Transverse colon (tissue), 4 donors: ENCODE measurements at regions of chr3 and their contacts with region 1.

Region 1: GRCh38 chr3:181105646-181106045 is 116.1 kb upstream of the DNAJC19 start:
- DNase-seq: no peak
- H3K4me3 ChIP-seq: no peak overlapping the region
- H3K27ac ChIP-seq: no peak overlapping the region
- H3K4me1 ChIP-seq: no peaks in the 10 kb centered on the region
- H3K27me3 ChIP-seq: no peaks in the 10 kb centered on the region
- CTCF ChIP-seq: no peak
- EP300 ChIP-seq: no peak
- POLR2A ChIP-seq: no peak

Region 2: GRCh38 chr3:180898572-180898971 is 207.1 kb before region 1 on chr3:
- in situ Hi-C with region 1: no loop called
- intact Hi-C with region 1: loop called (anchors 5 kb)
- DNase-seq: no peak
- H3K4me3 ChIP-seq: no peak overlapping the region
- H3K27ac ChIP-seq: no peak overlapping the region
- H3K4me1 ChIP-seq: no peaks in the 10 kb centered on the region
- H3K27me3 ChIP-seq: no peaks in the 10 kb centered on the region
- CTCF ChIP-seq: no peak
- EP300 ChIP-seq: no peak
- POLR2A ChIP-seq: no peak